ENCODE measurements at regions of chr14 and their contacts with region 1.

Region 1: DNA sequence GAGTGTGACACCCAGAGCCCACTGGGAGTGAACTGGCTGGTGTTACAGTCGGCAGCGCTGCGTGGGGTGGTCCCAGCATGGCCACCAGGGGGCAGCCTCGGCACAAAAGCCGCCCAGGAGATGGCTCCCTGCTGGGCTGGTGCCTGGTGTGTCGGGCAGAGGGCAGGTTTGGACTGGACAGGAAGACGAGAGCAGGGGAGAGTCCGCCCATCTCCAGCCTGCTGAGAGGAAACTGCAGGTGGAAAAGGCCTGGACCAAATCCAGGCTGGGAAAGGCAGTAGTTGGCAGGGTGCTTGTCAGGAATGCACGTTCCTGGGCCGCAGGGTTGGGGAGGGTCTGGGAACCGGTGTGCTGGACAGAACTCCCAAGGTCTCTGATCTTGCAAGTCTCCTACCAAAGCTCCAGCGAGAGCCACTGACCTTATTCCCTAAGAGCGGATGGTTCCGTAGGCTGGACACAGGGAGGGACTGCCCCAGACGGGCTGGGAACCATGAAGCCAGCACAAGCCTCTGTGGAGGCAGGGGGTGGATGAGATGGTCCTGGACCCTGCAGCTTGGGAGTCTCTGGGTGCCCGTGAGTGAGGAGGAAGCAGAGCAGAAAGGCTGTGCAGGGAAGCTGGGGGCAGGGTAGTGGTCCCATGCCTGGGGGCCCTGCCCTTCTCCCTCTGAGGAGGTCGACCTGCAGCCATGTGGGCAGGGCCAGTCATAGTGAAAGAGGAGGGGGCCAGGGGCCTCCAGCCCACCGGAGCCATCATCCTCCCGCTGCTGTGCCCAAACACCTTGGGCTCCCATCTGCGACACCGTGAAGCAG is 1.8 kb downstream of the AHNAK2 start:
- DNase-seq: peak; percentile 80 to 87
- ATAC-seq: peak; percentile 56 to 73 (median 69)
- H3K4me3 ChIP-seq: no peak overlapping the region
- H3K27ac ChIP-seq: no peak overlapping the region
- H3K4me1 ChIP-seq: peaks cover 12 to 80% (median 59%) of the 10 kb centered on the region in 9 donors
- H3K27me3 ChIP-seq: peaks cover 0 to 38% (median 13%) of the 10 kb centered on the region in 7 donors
- CTCF ChIP-seq: peak; percentile 80 to 96 (median 92)

Region 2: GRCh38 chr14:104895786-104896661 is 80.4 kb before region 1 on chr14:
- intact Hi-C with region 1: loop called in 1 of 10 experiments (anchors 10 kb)
- DNase-seq: peak in 1 of 2 donors; percentile 28
- ATAC-seq: peak in 5 of 8 donors; percentile 3 to 35 (median 14)
- H3K4me3 ChIP-seq: no peak overlapping the region
- H3K27ac ChIP-seq: no peak overlapping the region
- H3K4me1 ChIP-seq: peaks cover 5 to 30% (median 17%) of the 10 kb centered on the region in 9 donors
- H3K27me3 ChIP-seq: no peaks in the 10 kb centered on the region
- CTCF ChIP-seq: no peak

Region 3: GRCh38 chr14:105020815-105021655 is 44.6 kb after region 1 on chr14 and contains the start of gene CDCA4:
- intact Hi-C with region 1: loop called in 3 of 10 experiments (anchors 2 to 5 kb)
- DNase-seq: peak; percentile 96 to 98
- ATAC-seq: peak; percentile 96 to 98 (median 97)
- H3K4me3 ChIP-seq: peak within 1 kb of the TSS; percentile 71 to 94 (median 82)
- H3K27ac ChIP-seq: peak within 1 kb of the TSS; percentile 9 to 90 (median 83)
- H3K4me1 ChIP-seq: peaks cover 5 to 78% (median 30%) of the 10 kb centered on the region in 9 donors
- H3K27me3 ChIP-seq: no peaks in the 10 kb centered on the region
- CTCF ChIP-seq: no peak
- total RNA-seq, gene CDCA4: 1.5 to 6.4 (median 2.0) TPM

Region 4: GRCh38 chr14:105045710-105046326 is 69.4 kb after region 1 on chr14:
- intact Hi-C with region 1: loop called (anchors 1 to 5 kb)
- DNase-seq: peak; percentile 91 to 92
- ATAC-seq: peak; percentile 86 to 96 (median 93)
- H3K4me3 ChIP-seq: peak overlapping the region in 1 of 10 donors; percentile 15
- H3K27ac ChIP-seq: no peak overlapping the region
- H3K4me1 ChIP-seq: peaks cover 0 to 23% (median 0%) of the 10 kb centered on the region in 9 donors
- H3K27me3 ChIP-seq: peaks cover 0 to 26% (median 0%) of the 10 kb centered on the region in 7 donors
- CTCF ChIP-seq: peak in 8 of 9 donors; percentile 99 to 100 (median 100)

Region 5: DNA sequence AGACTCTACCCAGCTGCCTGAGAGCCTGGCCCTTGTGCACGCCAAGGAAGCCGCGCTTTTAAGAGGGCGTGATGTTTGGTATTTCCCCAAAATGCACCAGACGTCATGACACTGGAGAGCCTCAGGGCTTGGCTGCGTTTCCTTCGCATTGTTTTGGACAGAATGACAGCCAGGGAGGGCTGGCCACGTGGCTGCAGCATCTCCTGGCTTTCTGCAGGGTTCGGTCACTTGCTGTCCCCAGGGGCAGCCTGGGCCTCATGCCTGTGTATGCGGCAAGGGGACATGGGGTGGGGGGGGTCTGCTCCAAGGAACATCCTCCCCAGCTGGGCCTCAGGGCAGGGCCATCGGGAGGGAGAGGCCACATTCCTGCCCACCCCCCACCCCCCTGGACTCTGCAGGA is 220.9 kb after region 1 on chr14:
- intact Hi-C with region 1: loop called in 1 of 10 experiments (anchors 10 kb)
- DNase-seq: peak; percentile 71 to 82
- ATAC-seq: peak; percentile 25 to 61 (median 43)
- H3K4me3 ChIP-seq: peak overlapping the region in 5 of 10 donors; percentile 6 to 38 (median 30)
- H3K27ac ChIP-seq: peak overlapping the region; percentile 80 to 96 (median 88)
- H3K4me1 ChIP-seq: peaks cover 28 to 97% (median 83%) of the 10 kb centered on the region in 9 donors
- H3K27me3 ChIP-seq: peaks cover 8 to 93% (median 46%) of the 10 kb centered on the region in 7 donors
- CTCF ChIP-seq: no peak

Region 6: GRCh38 chr14:105351920-105352851 is 375.8 kb after region 1 on chr14:
- intact Hi-C with region 1: loop called in 1 of 10 experiments (anchors 10 kb)
- DNase-seq: peak; percentile 78 to 84
- ATAC-seq: peak; percentile 79 to 94 (median 89)
- H3K4me3 ChIP-seq: no peak overlapping the region
- H3K27ac ChIP-seq: peak overlapping the region in 5 of 10 donors; percentile 4 to 58 (median 30)
- H3K4me1 ChIP-seq: peaks cover 0 to 14% (median 6%) of the 10 kb centered on the region in 9 donors
- H3K27me3 ChIP-seq: no peaks in the 10 kb centered on the region
- CTCF ChIP-seq: peak; percentile 74 to 89 (median 86)